ENCODE measurements at regions of chr7 and their contacts with region 1.

Region 1: DNA sequence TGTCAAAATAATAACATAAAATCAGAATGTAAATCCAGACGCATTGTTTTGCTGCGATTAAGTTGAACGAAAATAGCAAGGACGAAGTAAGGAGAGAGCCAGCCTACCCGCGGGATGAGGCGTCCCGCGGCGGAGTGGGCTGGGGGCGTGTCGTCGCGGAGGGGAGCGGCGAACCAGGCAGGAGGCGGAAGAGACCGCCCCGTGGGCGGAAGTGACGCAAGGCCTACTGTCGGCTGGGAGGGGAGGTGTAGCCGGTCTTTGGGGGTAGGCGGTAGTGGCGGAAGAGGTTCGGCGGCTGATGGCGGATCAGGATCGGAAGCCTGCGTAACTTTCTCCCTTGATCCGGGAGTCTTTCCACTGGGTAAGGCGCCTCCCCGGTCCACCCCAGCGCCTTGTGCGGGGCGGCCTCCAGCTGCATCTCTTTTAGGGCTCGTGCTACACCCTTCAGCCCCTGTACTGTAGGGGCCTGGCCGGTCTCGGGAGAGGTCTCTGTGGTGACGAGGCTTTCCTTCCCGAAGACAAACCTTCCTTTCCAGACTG is at the start of gene TAX1BP1:
- DNase-seq: peak; percentile 98
- H3K4me3 ChIP-seq: peak within 1 kb of the TSS; percentile 77 to 97 (median 83)
- H3K27ac ChIP-seq: peak within 1 kb of the TSS; percentile 94 to 99 (median 96)
- H3K4me1 ChIP-seq: peaks cover 20 to 53% (median 47%) of the 10 kb centered on the region in 4 donors
- H3K27me3 ChIP-seq: no peaks in the 10 kb centered on the region
- CTCF ChIP-seq: no peak
- EP300 ChIP-seq: no peak
- POLR2A ChIP-seq: peak; percentile 89
- total RNA-seq, gene TAX1BP1: 107 to 139 (median 127) TPM

Region 2: DNA sequence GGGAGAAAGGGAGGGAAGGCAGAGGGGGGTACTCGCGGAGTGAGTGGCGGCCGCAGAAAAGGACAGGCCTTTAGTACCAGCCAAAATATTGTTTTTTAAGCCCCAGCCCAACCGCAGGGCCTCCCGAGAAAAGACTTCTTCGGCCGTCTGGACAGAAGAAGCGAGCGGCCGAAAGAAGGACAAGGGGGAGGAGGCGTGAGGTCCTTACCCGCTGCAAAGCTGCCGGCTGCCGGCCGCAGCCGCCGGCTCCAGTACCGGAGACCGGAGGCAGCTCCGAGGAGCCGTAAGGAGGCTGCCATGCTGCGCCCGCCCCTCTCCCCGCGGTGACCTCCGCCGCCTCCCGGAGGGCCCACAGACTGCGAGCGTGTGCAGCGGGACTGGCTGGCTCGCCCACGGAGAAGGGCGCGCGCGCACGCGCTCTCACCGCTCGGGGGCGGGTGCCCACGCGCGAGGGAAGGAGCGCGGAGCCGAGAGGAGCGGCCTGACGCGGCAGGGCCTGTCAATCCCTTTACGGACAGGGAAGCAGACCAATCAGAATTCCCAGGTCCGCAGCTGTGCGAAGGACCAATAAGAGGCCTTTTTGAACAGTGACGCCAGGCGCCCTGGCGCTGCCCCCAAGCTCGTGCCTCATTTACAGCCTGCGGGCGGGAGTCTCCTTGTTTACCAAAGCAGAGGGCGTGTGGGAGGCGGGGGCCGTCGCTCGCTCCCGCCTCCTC is 77.3 kb before region 1 on chr7 and contains the start of gene HIBADH:
- intact Hi-C with region 1: loop called (anchors 2 kb)
- DNase-seq: peak; percentile 100
- H3K4me3 ChIP-seq: peak within 1 kb of the TSS; percentile 66 to 93 (median 80)
- H3K27ac ChIP-seq: peak within 1 kb of the TSS; percentile 82 to 95 (median 92)
- H3K4me1 ChIP-seq: peaks cover 13 to 22% (median 19%) of the 10 kb centered on the region in 4 donors
- H3K27me3 ChIP-seq: no peaks in the 10 kb centered on the region
- CTCF ChIP-seq: peak in 2 of 3 experiments; percentile 27 to 28
- EP300 ChIP-seq: no peak
- POLR2A ChIP-seq: peak; percentile 80
- total RNA-seq, gene HIBADH: 45.4 to 66.0 (median 52.3) TPM

Region 3: DNA sequence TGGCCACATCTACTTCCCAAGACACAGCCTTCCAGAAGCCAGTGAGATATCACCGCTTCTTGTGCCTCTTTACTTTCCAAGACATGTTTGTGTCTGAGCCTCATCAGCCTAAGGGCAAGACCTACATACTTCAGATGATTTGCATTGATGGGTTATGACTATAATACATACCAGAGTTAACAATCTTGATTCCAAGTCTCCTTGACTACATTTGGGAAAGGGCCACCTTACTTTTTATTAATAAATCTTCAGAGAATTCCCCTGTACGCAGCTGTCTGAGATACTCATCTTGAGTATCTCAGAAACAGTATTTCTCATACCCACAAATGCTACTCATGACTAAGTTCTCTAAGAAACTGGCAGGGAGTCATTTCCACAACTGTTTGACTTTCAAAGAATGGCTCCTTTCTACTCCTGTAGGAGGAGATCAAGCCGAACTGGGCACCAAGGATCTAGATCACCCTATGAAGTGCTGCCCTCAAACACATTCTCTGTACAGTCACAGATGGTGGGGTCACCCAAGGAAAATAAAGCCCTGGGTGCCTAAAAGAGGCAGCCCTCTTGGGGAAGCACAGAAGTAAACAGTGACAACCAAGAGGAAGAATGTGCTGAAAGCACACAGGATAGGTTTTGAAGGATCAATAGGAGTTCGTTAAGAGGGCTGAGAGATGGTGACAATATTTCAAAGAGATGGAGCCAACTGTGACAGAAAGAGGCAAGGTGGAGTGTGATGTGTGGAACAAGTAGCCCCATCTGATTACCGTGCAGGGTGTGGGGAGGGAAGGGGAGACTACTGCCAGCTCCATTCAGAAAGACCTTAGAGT is 301.7 kb after region 1 on chr7:
- intact Hi-C with region 1: no loop called
- DNase-seq: no peak
- H3K4me3 ChIP-seq: no peak overlapping the region
- H3K27ac ChIP-seq: peak overlapping the region in 3 of 4 donors; percentile 27 to 58 (median 35)
- H3K4me1 ChIP-seq: peaks cover 10 to 54% (median 42%) of the 10 kb centered on the region in 4 donors
- H3K27me3 ChIP-seq: no peaks in the 10 kb centered on the region
- CTCF ChIP-seq: no peak
- EP300 ChIP-seq: no peak
- POLR2A ChIP-seq: no peak

Measured in esophagus muscularis mucosa (tissue), 4 donors.